B cell (primary cell): ENCODE measurements at regions of chr18 and their contacts with region 1.

Region 1: DNA sequence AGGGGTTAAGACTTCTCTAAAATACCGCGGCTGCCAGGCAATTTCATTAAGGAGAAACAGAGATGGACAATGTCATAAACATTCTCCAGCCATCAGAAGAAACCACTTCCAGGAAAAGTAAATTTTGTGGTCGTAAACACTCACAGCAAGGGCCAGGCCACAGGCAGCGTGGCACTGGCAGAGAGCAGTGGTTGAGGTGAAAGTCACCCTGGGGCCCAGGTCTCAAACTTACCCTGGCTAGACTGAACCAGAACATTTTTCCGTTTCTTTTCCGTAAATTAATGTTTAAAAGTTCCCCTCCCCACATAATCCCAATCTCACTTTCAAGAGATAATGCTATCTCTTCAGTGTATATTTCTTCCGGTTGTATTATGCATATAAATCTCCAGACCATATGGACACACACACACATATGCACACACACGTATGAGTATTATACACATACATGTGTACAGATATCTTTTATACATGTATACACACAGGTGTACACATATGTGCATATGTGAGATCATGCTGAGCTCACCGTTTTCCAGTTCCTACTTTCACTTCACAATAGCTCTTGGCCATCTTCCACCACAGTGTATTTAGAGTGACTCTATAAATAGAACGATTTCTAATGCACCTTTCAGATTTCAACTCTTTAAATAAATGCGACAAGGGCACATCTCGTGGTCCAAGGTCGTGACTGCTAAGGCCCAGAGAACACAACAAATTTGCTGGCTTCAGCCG is 90.1 kb downstream of the MALT1 start:
- DNase-seq: peak; percentile 42
- ATAC-seq: peak; percentile 52
- H3K4me3 ChIP-seq: no peak overlapping the region
- H3K4me3 Mint-ChIP-seq: peak overlapping the region; percentile 24
- H3K27ac ChIP-seq: no peak overlapping the region
- H3K27ac Mint-ChIP-seq: peak overlapping the region; percentile 26
- H3K4me1 ChIP-seq: peaks cover 18 to 29% of the 10 kb centered on the region in 2 donors
- H3K4me1 Mint-ChIP-seq: peaks cover 25% of the 10 kb centered on the region
- H3K27me3 ChIP-seq: peaks cover 0 to 18% (median under 1%) of the 10 kb centered on the region in 4 experiments
- H3K27me3 Mint-ChIP-seq: peaks cover 13% of the 10 kb centered on the region
- CTCF ChIP-seq: no peak

Region 2: GRCh38 chr18:58135701-58136331 is 625.6 kb before region 1 on chr18:
- CTCF ChIA-PET with region 1: no interaction called
- POLR2A ChIA-PET with region 1: interaction called, 3 read pairs
- intact Hi-C with region 1: loop called (anchors 5 kb)
- DNase-seq: peak; percentile 75
- ATAC-seq: peak; percentile 71
- H3K4me3 ChIP-seq: no peak overlapping the region
- H3K4me3 Mint-ChIP-seq: peak overlapping the region; percentile 48
- H3K27ac ChIP-seq: no peak overlapping the region
- H3K27ac Mint-ChIP-seq: no peak overlapping the region
- H3K4me1 ChIP-seq: peaks cover 10 to 13% of the 10 kb centered on the region in 2 donors
- H3K4me1 Mint-ChIP-seq: peaks cover 19% of the 10 kb centered on the region
- H3K27me3 ChIP-seq: peaks cover 0 to 4% (median 0%) of the 10 kb centered on the region in 4 experiments
- H3K27me3 Mint-ChIP-seq: peaks cover 4% of the 10 kb centered on the region
- CTCF ChIP-seq: peak; percentile 87

Region 3: GRCh38 chr18:58493516-58494253 is 267.7 kb before region 1 on chr18:
- CTCF ChIA-PET with region 1: interaction called, 26 read pairs
- POLR2A ChIA-PET with region 1: no interaction called
- intact Hi-C with region 1: loop called (anchors 1 kb)
- DNase-seq: peak; percentile 74
- ATAC-seq: peak; percentile 89
- H3K4me3 ChIP-seq: no peak overlapping the region
- H3K4me3 Mint-ChIP-seq: no peak overlapping the region
- H3K27ac ChIP-seq: no peak overlapping the region
- H3K27ac Mint-ChIP-seq: no peak overlapping the region
- H3K4me1 ChIP-seq: peaks cover 0 to 5% of the 10 kb centered on the region in 2 donors
- H3K4me1 Mint-ChIP-seq: peaks cover 7% of the 10 kb centered on the region
- H3K27me3 ChIP-seq: peaks cover 0 to 22% (median 10%) of the 10 kb centered on the region in 4 experiments
- H3K27me3 Mint-ChIP-seq: peaks cover 47% of the 10 kb centered on the region
- CTCF ChIP-seq: peak; percentile 88

Region 4: DNA sequence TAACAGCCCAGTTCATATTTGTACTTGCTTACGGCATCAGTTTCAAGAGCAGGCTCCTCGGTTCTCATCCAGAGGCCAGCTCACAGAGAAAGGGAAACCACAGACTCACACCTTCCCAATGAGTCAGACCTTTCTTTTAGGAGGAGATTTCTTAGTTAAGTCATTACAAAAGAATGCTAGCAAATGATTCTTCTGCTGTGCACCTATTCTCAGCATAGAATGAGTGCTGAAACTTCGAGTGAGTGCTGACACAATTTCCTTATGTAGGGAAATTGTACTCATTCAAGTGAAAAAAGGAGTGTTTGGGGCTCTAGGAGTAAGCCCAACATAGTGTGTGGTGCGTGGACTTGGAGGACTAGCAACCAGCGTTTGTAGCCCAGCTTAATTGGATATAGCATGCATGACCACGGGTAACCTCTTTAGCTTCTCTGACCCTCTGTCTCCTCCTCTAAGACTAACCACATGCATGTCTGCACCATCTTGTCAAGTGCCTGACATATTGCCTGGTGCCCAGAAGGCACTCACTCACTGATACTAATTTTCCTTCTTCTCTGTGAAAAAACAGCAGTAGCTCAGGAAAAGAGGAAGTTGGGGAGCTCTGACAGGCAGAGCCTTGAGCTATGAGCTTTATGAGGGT is 219.5 kb before region 1 on chr18:
- CTCF ChIA-PET with region 1: interaction called, 337 read pairs
- POLR2A ChIA-PET with region 1: interaction called, 3 read pairs
- intact Hi-C with region 1: no loop called
- DNase-seq: peak; percentile 64
- ATAC-seq: peak; percentile 67
- H3K4me3 ChIP-seq: no peak overlapping the region
- H3K4me3 Mint-ChIP-seq: no peak overlapping the region
- H3K27ac ChIP-seq: no peak overlapping the region
- H3K27ac Mint-ChIP-seq: peak overlapping the region; percentile 26
- H3K4me1 ChIP-seq: peaks cover 37 to 44% of the 10 kb centered on the region in 2 donors
- H3K4me1 Mint-ChIP-seq: peaks cover 54% of the 10 kb centered on the region
- H3K27me3 ChIP-seq: no peaks in the 10 kb centered on the region
- H3K27me3 Mint-ChIP-seq: no peaks in the 10 kb centered on the region
- CTCF ChIP-seq: no peak

Region 5: GRCh38 chr18:58618822-58619595 is 142.4 kb before region 1 on chr18:
- CTCF ChIA-PET with region 1: no interaction called
- POLR2A ChIA-PET with region 1: no interaction called
- intact Hi-C with region 1: no loop called
- DNase-seq: no peak
- ATAC-seq: no peak
- H3K4me3 ChIP-seq: no peak overlapping the region
- H3K4me3 Mint-ChIP-seq: no peak overlapping the region
- H3K27ac ChIP-seq: no peak overlapping the region
- H3K27ac Mint-ChIP-seq: no peak overlapping the region
- H3K4me1 ChIP-seq: peaks cover 14 to 15% of the 10 kb centered on the region in 2 donors
- H3K4me1 Mint-ChIP-seq: peaks cover 19% of the 10 kb centered on the region
- H3K27me3 ChIP-seq: no peaks in the 10 kb centered on the region
- H3K27me3 Mint-ChIP-seq: no peaks in the 10 kb centered on the region
- CTCF ChIP-seq: no peak

Region 6: GRCh38 chr18:59566533-59566971 is 805.1 kb after region 1 on chr18:
- CTCF ChIA-PET with region 1: no interaction called
- POLR2A ChIA-PET with region 1: no interaction called
- intact Hi-C with region 1: no loop called
- DNase-seq: no peak
- ATAC-seq: no peak
- H3K4me3 ChIP-seq: no peak overlapping the region
- H3K4me3 Mint-ChIP-seq: no peak overlapping the region
- H3K27ac ChIP-seq: no peak overlapping the region
- H3K27ac Mint-ChIP-seq: no peak overlapping the region
- H3K4me1 ChIP-seq: no peaks in the 10 kb centered on the region
- H3K4me1 Mint-ChIP-seq: peaks cover 4% of the 10 kb centered on the region
- H3K27me3 ChIP-seq: no peaks in the 10 kb centered on the region
- H3K27me3 Mint-ChIP-seq: peaks cover 9% of the 10 kb centered on the region
- CTCF ChIP-seq: no peak